GM10248 (cell line): ENCODE measurements at regions of chr6 and their contacts with region 1.

Region 1: GRCh38 chr6:117976030-117976651 is 69.1 kb downstream of the SLC35F1 start:
- DNase-seq: peak; percentile 31
- CTCF ChIP-seq: peak; percentile 68

Region 2: DNA sequence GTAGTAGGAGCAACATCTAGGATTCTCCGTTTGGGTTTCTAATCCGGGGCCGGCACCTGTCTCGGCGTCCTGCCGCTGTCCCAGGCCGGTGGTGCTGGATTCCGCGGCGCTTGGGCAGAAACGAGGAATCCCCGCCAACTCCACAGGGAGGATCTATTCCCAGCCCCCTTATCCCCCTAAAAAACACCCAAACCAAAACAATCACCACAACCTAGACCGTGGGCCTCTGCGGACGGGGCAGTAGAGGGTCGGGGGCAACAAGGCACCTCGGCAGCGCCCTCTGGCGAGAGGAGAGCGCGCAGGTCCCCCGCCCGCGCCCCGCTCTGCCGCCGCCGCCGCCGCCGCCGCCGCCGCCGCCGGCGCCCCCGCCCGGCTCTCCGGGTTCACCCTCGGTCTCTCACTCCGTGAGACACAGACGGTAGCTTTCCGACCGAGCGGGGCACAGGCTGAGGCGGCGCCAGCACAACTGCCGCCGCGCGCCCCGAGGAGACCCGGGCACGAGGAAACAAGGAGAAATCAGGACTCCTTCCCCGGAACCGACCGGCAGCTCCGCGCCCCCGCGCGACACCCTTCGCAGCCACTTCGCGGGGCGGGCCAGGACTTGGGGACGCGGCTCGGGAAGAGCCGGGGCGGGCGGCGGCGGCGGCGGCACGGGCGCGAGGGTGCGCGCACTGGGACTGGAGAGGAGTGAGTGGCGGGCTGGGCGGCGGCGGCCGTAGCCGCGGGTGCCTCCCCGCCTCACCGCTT is 69.1 kb before region 1 on chr6 and contains the start of gene SLC35F1:
- CTCF ChIA-PET with region 1: no interaction called
- POLR2A ChIA-PET with region 1: no interaction called
- DNase-seq: peak; percentile 64
- CTCF ChIP-seq: peak; percentile 51

Region 3: DNA sequence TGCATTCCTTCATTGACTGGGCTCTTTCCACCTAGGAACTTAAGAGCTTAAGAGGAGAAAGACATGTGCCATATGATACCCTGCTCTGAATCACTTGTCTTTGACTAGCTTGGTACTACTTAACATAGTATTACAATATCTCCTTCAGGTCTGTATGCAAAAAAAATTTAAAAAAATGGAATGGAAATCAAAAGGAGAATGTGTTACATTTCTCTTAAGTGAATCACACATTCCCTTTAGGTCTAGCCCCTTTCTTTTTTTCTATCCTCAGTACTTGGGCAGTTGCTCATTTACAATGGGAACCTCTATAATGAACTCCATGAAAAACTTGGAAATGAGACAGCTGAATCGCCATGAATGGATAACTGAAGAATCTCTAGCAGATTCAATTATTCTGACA is 15.3 kb before region 1 on chr6:
- CTCF ChIA-PET with region 1: interaction called, 26 read pairs
- POLR2A ChIA-PET with region 1: no interaction called
- DNase-seq: no peak
- CTCF ChIP-seq: no peak

Region 4: GRCh38 chr6:118097576-118097975 is 121.4 kb after region 1 on chr6:
- CTCF ChIA-PET with region 1: no interaction called
- POLR2A ChIA-PET with region 1: no interaction called
- DNase-seq: no peak
- CTCF ChIP-seq: no peak

Region 5: DNA sequence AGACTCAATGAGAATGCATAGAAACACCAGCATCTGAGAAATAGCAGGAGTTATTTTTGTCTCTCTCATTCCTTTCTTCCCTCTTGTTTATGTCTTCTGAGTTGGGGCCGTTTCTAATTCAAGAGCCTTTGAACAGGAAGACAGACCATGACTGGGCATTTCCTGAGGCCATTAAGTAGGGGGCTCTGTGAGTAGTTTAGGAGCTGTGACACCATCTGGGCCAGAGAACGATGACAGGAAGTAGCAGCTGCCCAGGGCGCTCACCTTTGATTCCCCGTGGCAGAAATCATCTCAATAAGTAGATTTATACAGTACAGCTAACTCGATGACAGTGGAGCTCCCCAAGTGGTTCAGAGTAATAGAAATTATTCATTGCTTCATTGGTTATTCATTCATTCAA is 273.5 kb after region 1 on chr6:
- CTCF ChIA-PET with region 1: no interaction called
- POLR2A ChIA-PET with region 1: no interaction called
- DNase-seq: no peak
- CTCF ChIP-seq: no peak